ENCODE measurements at regions of chr5 and their contacts with region 1.

Region 1: DNA sequence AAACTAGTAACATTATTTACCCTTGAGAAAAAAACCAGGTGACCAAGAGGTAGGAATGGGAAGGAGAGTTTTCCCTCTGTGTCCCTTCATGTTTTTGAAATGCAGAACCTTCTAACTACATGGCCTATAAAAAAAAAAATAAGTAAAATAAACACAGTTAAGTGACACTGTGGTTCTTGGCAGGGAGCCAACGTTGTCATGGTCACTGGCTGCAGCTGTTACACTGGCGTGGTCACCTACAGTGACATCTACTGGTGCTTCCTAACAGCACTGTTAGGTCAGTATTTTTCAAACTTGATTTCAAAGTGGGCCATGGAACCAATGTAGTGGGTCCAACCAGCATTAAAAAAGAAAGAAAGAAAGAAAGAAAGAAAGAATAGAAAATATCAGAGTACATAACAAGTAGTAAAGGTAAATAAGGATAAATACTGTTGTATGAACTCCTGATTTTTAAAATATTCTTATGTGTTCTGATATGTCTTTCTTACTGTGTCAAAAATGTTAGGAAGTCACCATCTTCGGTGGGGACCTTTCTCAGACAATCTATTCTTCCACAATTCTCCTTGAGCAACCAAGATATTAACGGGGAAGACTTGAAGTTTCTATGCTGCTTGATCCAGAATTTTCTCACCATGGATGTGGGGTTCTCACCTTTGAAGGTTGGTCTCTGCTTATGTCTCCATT is 59.1 kb upstream of the PJA2 start:
- DNase-seq: peak; percentile 90
- H3K4me3 Mint-ChIP-seq: no peak overlapping the region
- H3K27ac Mint-ChIP-seq: no peak overlapping the region
- H3K4me1 Mint-ChIP-seq: peaks cover 5% of the 10 kb centered on the region
- H3K27me3 Mint-ChIP-seq: peaks cover 7% of the 10 kb centered on the region

Region 2: DNA sequence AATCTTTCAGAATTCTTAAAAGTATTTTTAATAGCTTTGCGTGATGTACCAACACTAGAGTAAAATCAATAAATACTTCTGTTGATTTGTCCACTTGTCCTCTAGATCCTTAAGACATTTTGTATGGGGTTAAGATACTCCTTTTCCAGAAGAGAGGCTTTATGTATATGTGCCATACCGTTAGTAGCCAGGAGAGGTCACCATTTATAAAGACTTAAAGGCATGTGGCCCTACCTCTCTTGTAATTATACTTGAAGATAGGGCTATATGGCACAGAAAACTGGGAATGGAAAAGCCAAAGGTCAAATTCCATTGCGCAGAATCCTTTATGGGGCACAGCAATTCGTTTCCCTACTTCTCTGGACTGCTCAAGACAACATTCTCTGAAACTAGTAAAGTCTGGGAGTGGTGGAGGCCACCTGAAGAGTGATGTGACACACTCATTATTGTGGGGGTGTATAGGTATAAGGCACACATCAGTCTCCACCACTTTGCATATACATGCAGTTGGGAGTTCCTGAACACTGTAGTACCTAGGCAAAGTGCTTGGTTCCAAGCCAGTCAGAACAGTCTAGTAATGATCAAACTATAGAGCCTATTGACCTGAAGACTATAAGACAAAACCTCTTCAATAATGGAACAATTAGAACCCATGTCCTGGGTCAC is 946.9 kb before region 1 on chr5:
- CTCF ChIA-PET with region 1: interaction called, 3 read pairs
- intact Hi-C with region 1: loop called (anchors 1 kb)
- DNase-seq: peak; percentile 23
- H3K4me3 Mint-ChIP-seq: no peak overlapping the region
- H3K27ac Mint-ChIP-seq: no peak overlapping the region
- H3K4me1 Mint-ChIP-seq: no peaks in the 10 kb centered on the region
- H3K27me3 Mint-ChIP-seq: peaks cover 2% of the 10 kb centered on the region

Region 3: GRCh38 chr5:109601736-109602135 is 132.9 kb after region 1 on chr5:
- CTCF ChIA-PET with region 1: no interaction called
- intact Hi-C with region 1: no loop called
- DNase-seq: no peak
- H3K4me3 Mint-ChIP-seq: no peak overlapping the region
- H3K27ac Mint-ChIP-seq: no peak overlapping the region
- H3K4me1 Mint-ChIP-seq: no peaks in the 10 kb centered on the region
- H3K27me3 Mint-ChIP-seq: no peaks in the 10 kb centered on the region

Measured in activated naive CD4-positive, alpha-beta T cell treated with anti-CD3 and anti-CD28 coated beads for 36 hours (primary cell).